ENCODE measurements at regions of chr10 and their contacts with region 1.

Region 1: DNA sequence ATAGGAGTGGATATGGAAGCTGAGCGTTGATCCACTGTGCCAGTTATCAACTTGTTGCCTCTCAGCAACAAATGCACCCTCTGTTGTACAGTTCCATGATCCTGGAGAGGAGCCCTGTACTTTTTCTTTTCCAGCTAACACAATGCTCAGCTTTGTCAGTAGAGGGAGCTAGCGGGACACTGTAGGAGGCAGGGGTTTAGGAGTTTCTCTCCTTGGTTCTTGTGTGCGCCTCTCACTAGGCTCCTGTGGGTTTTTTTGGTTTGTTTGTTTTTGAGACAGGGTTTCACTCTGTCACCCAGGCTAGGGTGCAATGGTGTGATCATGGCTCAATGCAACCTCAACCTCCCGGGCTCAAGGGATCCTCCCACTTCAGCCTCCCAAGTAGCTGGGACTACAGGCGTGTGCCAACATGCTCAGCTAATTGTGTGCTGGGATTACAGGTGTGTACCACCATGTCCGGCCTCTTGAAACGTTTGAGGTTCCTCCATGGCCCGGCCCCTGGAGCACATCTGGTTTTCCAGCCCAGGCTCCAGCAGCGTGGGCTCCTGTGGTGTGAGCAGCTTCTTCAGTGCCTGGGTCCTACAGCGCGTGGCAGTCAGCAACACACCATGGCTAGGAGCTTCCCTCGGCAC is 12.0 kb upstream of the MARVELD1 start:
- DNase-seq: peak; percentile 68
- ATAC-seq: peak; percentile 96
- H3K4me3 Mint-ChIP-seq: no peak overlapping the region
- H3K27ac Mint-ChIP-seq: no peak overlapping the region
- H3K4me1 Mint-ChIP-seq: peaks cover 8% of the 10 kb centered on the region
- H3K27me3 Mint-ChIP-seq: peaks cover 21% of the 10 kb centered on the region

Region 2: DNA sequence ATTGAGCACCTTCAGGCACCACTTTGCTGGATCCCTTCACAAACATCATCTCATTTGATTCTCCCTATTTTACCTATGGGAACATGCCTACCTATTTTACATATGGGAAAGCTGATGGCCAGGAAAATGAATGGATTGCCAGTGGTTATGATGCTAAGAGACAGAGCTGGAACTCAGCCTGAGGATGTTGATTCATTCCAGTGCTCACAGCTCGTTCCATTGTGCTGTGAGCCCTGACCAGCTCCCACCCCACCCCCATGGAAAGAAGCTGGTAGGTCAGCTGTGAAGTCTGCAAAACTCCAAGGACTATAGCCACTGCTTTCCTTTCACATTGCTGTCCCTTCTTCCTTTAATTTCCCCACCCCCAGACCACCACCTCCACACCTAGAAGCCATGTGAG is 193.2 kb before region 1 on chr10:
- CTCF ChIA-PET with region 1: no interaction called
- DNase-seq: no peak
- ATAC-seq: no peak
- H3K4me3 Mint-ChIP-seq: no peak overlapping the region
- H3K27ac Mint-ChIP-seq: no peak overlapping the region
- H3K4me1 Mint-ChIP-seq: no peaks in the 10 kb centered on the region
- H3K27me3 Mint-ChIP-seq: peaks cover 19% of the 10 kb centered on the region

Region 3: GRCh38 chr10:97676770-97677581 is 24.6 kb before region 1 on chr10:
- CTCF ChIA-PET with region 1: interaction called, 27 read pairs
- DNase-seq: peak; percentile 55
- ATAC-seq: peak; percentile 86
- H3K4me3 Mint-ChIP-seq: no peak overlapping the region
- H3K27ac Mint-ChIP-seq: no peak overlapping the region
- H3K4me1 Mint-ChIP-seq: peaks cover 23% of the 10 kb centered on the region
- H3K27me3 Mint-ChIP-seq: no peaks in the 10 kb centered on the region

Region 4: DNA sequence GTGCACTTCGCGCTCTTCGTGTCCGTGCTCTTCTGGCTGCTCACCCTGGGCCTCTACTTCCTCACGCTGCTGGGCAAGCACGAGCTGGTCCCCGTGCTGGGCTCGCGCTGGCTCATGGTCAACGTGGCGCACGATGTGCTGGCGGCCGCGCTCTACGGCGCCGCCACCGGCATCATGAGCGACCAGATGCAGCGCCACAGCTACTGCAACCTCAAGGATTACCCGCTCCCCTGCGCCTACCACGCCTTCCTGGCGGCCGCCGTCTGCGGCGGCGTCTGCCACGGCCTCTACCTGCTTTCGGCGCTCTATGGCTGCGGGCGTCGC is 12.5 kb after region 1 on chr10:
- CTCF ChIA-PET with region 1: interaction called, 48 read pairs
- DNase-seq: peak; percentile 68
- ATAC-seq: peak; percentile 83
- H3K4me3 Mint-ChIP-seq: peak overlapping the region; percentile 81
- H3K27ac Mint-ChIP-seq: peak overlapping the region; percentile 78
- H3K4me1 Mint-ChIP-seq: peaks cover 11% of the 10 kb centered on the region
- H3K27me3 Mint-ChIP-seq: peaks cover 45% of the 10 kb centered on the region

Region 5: DNA sequence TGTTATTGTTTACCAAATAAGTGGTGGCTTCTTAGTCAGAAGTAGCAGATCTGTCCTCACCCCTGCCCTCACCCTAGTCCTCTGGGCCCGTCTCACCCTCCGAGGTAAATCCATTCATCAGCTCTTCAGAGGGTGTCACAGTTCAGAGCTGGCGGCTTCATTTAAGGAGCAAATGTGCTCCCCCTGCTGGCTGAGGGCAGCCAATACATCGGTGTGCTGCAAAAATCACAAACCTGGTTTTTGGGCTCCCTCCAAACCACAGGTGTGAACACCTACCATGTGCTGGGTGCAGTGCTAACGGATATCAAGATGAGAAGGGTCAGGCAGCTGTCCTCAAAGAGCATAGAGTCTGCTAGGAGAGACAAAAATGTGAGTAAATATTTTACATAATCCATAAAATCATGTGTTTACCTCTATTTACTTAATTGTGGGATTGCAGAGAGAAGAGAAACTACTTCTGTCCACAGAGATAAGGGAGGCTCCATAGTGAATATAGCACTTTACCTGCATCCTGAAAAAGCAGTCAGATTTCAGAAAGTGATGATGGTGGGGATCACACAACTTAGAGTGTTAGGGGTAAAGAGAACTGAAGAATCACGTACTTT is 344.3 kb after region 1 on chr10:
- CTCF ChIA-PET with region 1: interaction called, 11 read pairs
- DNase-seq: peak; percentile 71
- ATAC-seq: peak; percentile 78
- H3K4me3 Mint-ChIP-seq: no peak overlapping the region
- H3K27ac Mint-ChIP-seq: no peak overlapping the region
- H3K4me1 Mint-ChIP-seq: peaks cover 2% of the 10 kb centered on the region
- H3K27me3 Mint-ChIP-seq: peaks cover 39% of the 10 kb centered on the region

Measured in activated CD8-positive, alpha-beta memory T cell treated with anti-CD3 and anti-CD28 coated beads, Interleukin-2, amount 10 ng/mL, durations not matched to agents 7 days and 5 days (primary cell).